GM10248 (cell line): ENCODE measurements at regions of chr9 and their contacts with region 1.

Region 1: GRCh38 chr9:7534211-7534935 is 265.2 kb downstream of the DMAC1 start:
- DNase-seq: no peak
- CTCF ChIP-seq: no peak

Region 2: DNA sequence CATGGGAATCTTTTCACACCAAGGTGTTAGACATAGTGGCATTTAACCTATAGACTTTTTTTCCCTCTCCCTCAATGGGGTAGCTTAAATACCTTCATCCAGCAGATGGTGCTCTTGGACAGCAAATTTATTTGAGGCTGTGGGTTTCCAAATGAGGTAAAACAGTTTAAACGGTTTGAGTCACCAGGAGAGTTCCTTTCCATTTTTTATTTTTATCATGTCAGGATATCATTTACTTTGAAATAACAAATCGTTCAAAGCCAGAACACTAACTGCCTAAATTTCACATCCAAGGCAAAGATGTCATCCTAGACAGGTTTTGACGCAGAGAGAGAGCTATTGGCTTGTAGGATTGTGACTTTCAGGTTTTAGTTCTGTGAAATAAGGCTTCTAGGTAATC is 706.9 kb before region 1 on chr9:
- CTCF ChIA-PET with region 1: interaction called, 12 read pairs
- POLR2A ChIA-PET with region 1: no interaction called
- DNase-seq: peak; percentile 53
- CTCF ChIP-seq: peak; percentile 54

Region 3: GRCh38 chr9:7055201-7055903 is 479.0 kb before region 1 on chr9:
- CTCF ChIA-PET with region 1: interaction called, 13 read pairs
- POLR2A ChIA-PET with region 1: no interaction called
- DNase-seq: peak; percentile 6
- CTCF ChIP-seq: no peak

Region 4: GRCh38 chr9:7320139-7320538 is 214.2 kb before region 1 on chr9:
- CTCF ChIA-PET with region 1: no interaction called
- POLR2A ChIA-PET with region 1: no interaction called
- DNase-seq: no peak
- CTCF ChIP-seq: no peak

Region 5: GRCh38 chr9:7358876-7359275 is 175.5 kb before region 1 on chr9:
- CTCF ChIA-PET with region 1: no interaction called
- POLR2A ChIA-PET with region 1: no interaction called
- DNase-seq: no peak
- CTCF ChIP-seq: no peak